ENCODE measurements at regions of chr6 and their contacts with region 1.

Region 1: DNA sequence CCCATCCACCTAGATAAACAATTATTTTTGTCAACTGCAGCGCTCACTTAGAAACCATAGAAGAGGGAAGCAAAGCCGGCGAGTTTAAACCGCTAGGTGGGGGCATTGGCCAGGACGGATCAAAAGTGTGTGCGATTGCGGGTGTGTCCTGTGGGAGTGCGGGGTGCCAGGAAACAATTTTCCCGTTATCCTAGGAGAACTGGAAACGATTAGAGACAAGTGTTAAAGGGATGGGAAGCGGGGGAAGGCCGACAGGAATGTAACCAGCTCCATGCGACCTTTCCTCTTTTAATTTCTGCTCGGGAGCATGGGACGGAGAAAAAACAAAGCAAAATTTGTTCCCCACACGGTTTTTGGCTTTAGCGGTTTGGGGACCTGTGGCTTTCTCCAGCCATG is 2.8 kb upstream of the HTR1B start:
- DNase-seq: no peak
- ATAC-seq: peak; percentile 53
- H3K4me3 ChIP-seq: peak overlapping the region; percentile 52
- H3K4me3 Mint-ChIP-seq: peak overlapping the region; percentile 78 to 91 (median 82)
- H3K27ac ChIP-seq: no peak overlapping the region
- H3K27ac Mint-ChIP-seq: peak overlapping the region in 3 of 9 donors; percentile 2 to 57 (median 52)
- H3K4me1 ChIP-seq: peaks cover 0 to 4% of the 10 kb centered on the region in 2 donors
- H3K4me1 Mint-ChIP-seq: peaks cover 9 to 32% (median 22%) of the 10 kb centered on the region in 7 donors
- H3K27me3 ChIP-seq: peaks cover 0 to 3% of the 10 kb centered on the region in 2 donors
- H3K27me3 Mint-ChIP-seq: peaks cover 50 to 66% (median 62%) of the 10 kb centered on the region in 5 donors

Region 2: GRCh38 chr6:79250107-79250514 is 1784.1 kb after region 1 on chr6:
- CTCF ChIA-PET with region 1: no interaction called
- POLR2A ChIA-PET with region 1: no interaction called
- intact Hi-C with region 1: loop called in 1 of 2 experiments (anchors 5 kb)
- DNase-seq: peak in 1 of 9 donors; percentile 22
- ATAC-seq: no peak
- H3K4me3 ChIP-seq: no peak overlapping the region
- H3K4me3 Mint-ChIP-seq: no peak overlapping the region
- H3K27ac ChIP-seq: no peak overlapping the region
- H3K27ac Mint-ChIP-seq: no peak overlapping the region
- H3K4me1 ChIP-seq: no peaks in the 10 kb centered on the region
- H3K4me1 Mint-ChIP-seq: no peaks in the 10 kb centered on the region
- H3K27me3 ChIP-seq: no peaks in the 10 kb centered on the region
- H3K27me3 Mint-ChIP-seq: peaks cover 0 to 3% (median 3%) of the 10 kb centered on the region in 5 donors